K562 (cell line): ENCODE measurements at regions of chr13 and their contacts with region 1.

Region 1: DNA sequence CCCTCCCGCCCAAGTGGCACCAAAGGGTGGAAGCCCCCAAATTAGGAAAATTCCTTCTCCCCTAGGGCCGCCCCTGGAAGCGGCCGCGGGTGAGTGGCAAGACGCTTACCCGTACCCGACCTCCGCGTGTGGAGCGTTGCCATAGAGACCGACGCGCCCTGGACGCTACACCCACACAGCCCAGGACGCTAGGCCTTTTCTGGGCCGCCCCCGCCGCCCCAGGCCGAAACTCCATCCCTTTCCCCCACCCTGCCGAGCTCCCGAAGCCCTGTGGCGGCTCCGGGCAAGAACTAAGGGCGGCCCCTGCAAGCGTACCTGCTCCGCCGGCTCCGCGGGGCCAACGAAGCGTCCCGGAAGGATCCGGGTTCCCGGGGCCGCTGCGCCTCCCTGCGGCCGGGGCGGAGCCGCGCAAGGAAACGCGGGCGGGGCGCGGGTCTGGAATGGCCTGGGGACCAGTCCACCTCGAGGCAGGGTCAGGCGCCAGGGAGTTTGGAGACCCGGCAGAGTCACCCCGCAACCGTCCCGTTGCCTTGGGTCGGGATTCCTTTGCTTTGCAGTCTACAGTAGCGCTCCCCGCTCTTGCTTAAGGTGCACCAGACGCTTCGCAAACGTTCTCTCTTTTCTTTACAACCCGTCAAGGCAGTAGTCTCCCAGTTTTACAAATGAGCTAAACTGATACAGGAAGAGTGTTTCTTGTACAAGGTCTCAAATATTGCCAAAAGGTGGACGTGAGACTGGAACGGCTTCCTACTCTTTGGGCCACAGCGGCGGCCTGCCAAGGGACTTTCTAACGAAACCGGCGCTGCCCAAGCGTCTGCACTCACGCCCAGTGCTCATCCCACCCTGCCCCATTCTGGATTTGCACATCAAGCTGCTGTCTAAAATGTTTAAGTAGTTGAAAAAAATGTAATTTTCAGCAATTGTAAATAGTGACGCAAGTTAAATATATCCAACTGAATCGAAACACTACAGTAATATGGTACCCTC is at the start of gene NEK5:
- DNase-seq: peak; percentile 70 to 78 (median 74)
- ATAC-seq: peak; percentile 94
- H3K4me3 ChIP-seq: peak within 1 kb of the TSS; percentile 64
- H3K27ac ChIP-seq: no peak within 1 kb of the TSS
- H3K4me1 ChIP-seq: peaks cover 22% of the 10 kb centered on the region in 2 experiments; a peak in 4 of 5 replicates
- H3K27me3 ChIP-seq: no peaks in the 10 kb centered on the region
- CTCF ChIP-seq: peak; percentile 73 to 81 (median 74)
- EP300 ChIP-seq: no peak
- POLR2A ChIP-seq: no peak
- RAD21 ChIP-seq: peak; percentile 79 to 84
- polyA plus RNA-seq, gene NEK5: 0.27 to 0.30 TPM

Region 2: GRCh38 chr13:51125498-51126226 is 1003.3 kb before region 1 on chr13:
- CTCF ChIA-PET with region 1: no interaction called
- POLR2A ChIA-PET with region 1: no interaction called
- in situ Hi-C with region 1: loop called (anchors 25 kb)
- intact Hi-C with region 1: no loop called
- DNase-seq: peak; percentile 23 to 55 (median 34)
- ATAC-seq: peak; percentile 91
- H3K4me3 ChIP-seq: no peak overlapping the region
- H3K27ac ChIP-seq: no peak overlapping the region
- H3K4me1 ChIP-seq: no peaks in the 10 kb centered on the region
- H3K27me3 ChIP-seq: no peaks in the 10 kb centered on the region
- CTCF ChIP-seq: peak; percentile 70 to 73 (median 71)
- EP300 ChIP-seq: no peak
- POLR2A ChIP-seq: no peak
- RAD21 ChIP-seq: peak; percentile 67 to 81

Region 3: DNA sequence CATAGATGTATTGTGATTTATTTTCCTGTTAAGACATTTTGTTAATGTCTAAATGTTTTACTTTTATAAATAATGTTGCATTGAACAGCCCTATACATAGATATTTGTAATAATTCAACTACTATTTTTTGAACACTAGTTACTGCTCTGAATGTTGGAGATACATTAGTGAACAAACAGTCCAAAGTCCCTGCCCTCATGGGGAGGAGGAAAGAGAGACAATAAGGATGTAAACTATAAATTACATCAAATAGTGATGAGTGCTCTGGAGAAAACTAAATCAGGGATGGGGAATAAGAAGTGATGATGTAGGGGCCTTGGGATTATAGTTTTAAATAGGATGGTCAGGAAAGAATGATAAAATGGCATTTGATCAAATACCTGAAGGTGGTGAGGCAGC is 663.9 kb before region 1 on chr13:
- CTCF ChIA-PET with region 1: no interaction called
- POLR2A ChIA-PET with region 1: no interaction called
- in situ Hi-C with region 1: no loop called
- intact Hi-C with region 1: no loop called
- DNase-seq: no peak
- ATAC-seq: no peak
- H3K4me3 ChIP-seq: no peak overlapping the region
- H3K27ac ChIP-seq: no peak overlapping the region
- H3K4me1 ChIP-seq: no peaks in the 10 kb centered on the region
- H3K27me3 ChIP-seq: no peaks in the 10 kb centered on the region; a peak in 1 of 5 replicates
- CTCF ChIP-seq: no peak
- EP300 ChIP-seq: no peak
- POLR2A ChIP-seq: no peak
- RAD21 ChIP-seq: no peak

Region 4: DNA sequence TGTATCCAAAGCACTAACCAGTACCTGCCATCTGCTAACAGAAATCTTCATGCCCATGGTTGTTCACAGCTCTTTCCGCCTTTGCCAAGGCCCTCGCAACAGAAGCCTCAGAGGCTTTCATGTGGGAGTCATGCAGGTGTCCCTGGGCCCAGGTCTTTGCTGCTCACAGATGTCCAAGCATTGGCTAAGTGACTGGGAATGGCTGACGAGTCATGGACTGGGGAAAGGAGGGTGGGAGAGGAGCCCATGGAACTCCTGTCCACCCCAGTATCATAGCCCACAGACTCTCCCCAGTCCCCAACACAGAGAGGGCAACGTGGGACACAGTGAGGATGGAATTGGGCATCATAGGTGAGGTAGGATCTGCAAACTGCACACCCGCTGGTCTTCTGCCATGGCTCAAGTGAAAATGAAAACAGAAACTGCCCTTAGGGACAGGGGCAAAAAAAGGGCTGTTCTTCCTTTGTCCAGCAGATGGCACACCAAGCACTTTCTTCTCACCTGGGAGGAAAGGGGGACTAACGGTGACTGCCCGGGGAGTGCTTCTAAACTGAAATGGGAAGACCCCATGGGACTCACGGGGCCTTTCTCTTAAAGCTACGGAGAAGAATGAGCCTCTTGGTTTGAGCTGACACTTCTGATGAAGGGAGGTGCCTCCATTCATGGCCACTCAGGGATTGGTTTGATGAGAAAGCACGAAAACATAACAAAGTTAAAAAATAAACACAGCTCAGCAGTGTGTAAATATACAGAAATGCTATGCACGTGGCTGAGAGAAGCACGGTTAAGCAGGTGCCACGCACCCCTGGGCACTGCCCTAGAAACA is 314.0 kb before region 1 on chr13:
- CTCF ChIA-PET with region 1: interaction called, 4 read pairs
- POLR2A ChIA-PET with region 1: interaction called, 3 read pairs
- in situ Hi-C with region 1: loop called (anchors 10 kb)
- intact Hi-C with region 1: loop called (anchors 2 kb)
- DNase-seq: peak; percentile 48 to 72 (median 57)
- ATAC-seq: peak; percentile 91
- H3K4me3 ChIP-seq: no peak overlapping the region
- H3K27ac ChIP-seq: no peak overlapping the region; the same call in 2 of the 3 replicates
- H3K4me1 ChIP-seq: peaks cover 6 to 16% of the 10 kb centered on the region in 2 experiments; a peak in 4 of 5 replicates
- H3K27me3 ChIP-seq: peaks cover 0 to 26% of the 10 kb centered on the region in 2 experiments; a peak in 3 of 5 replicates
- CTCF ChIP-seq: peak; percentile 67 to 80 (median 77)
- EP300 ChIP-seq: no peak
- POLR2A ChIP-seq: no peak
- RAD21 ChIP-seq: peak; percentile 54 to 75

Region 5: GRCh38 chr13:51844862-51845573 is 284.0 kb before region 1 on chr13 and contains the start of gene TMEM272:
- CTCF ChIA-PET with region 1: no interaction called
- POLR2A ChIA-PET with region 1: no interaction called
- in situ Hi-C with region 1: no loop called
- intact Hi-C with region 1: loop called (anchors 5 kb)
- DNase-seq: peak; percentile 70 to 86 (median 84)
- ATAC-seq: peak; percentile 92
- H3K4me3 ChIP-seq: no peak within 1 kb of the TSS
- H3K27ac ChIP-seq: peak within 1 kb of the TSS; percentile 54; the same call in 1 of the 3 replicates
- H3K4me1 ChIP-seq: peaks cover 6 to 8% of the 10 kb centered on the region in 2 experiments; a peak in 3 of 5 replicates
- H3K27me3 ChIP-seq: no peaks in the 10 kb centered on the region
- CTCF ChIP-seq: peak; percentile 76 to 92 (median 79)
- EP300 ChIP-seq: no peak
- POLR2A ChIP-seq: no peak
- RAD21 ChIP-seq: peak; percentile 33 to 59
- polyA plus RNA-seq, gene TMEM272: 0.07 TPM in 1 of 2 experiments, not detected in the other

Region 6: GRCh38 chr13:51959773-51960172 is 169.2 kb before region 1 on chr13:
- CTCF ChIA-PET with region 1: no interaction called
- POLR2A ChIA-PET with region 1: no interaction called
- in situ Hi-C with region 1: no loop called
- intact Hi-C with region 1: loop called (anchors 5 kb)
- DNase-seq: peak; percentile 21 to 37 (median 32)
- ATAC-seq: peak; percentile 69
- H3K4me3 ChIP-seq: no peak overlapping the region
- H3K27ac ChIP-seq: no peak overlapping the region; the same call in 2 of the 3 replicates
- H3K4me1 ChIP-seq: peaks cover 31 to 50% of the 10 kb centered on the region in 2 experiments
- H3K27me3 ChIP-seq: no peaks in the 10 kb centered on the region
- CTCF ChIP-seq: no peak
- EP300 ChIP-seq: no peak
- POLR2A ChIP-seq: no peak
- RAD21 ChIP-seq: no peak

Region 7: DNA sequence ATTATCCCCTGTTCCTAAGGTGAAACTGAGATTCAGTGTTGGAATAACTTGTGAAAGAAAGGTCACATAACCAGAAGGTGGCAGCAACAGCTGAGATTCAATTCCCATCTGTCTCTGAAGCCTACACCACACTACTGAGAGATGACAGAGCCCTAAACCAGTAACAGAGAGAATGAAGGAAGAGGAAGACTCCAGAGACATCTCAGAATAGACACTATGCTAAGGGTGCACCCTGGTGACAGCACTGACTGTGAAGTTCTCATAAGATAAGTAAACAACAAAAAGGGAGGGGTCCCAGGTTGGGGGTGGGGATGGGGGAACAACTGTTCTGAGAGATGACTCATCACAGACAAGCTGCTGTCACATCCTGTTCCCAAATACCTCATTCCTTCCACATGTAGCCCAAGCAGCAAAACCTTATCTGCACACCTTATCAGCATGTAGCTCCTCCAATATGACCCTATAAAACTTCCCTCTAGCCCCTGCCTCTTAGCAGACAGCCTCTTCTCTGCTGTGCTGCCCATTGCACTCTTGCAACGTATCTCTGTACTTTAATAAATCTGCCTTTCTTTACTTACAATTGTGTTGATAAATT is 58.0 kb before region 1 on chr13:
- CTCF ChIA-PET with region 1: interaction called, 5 read pairs
- POLR2A ChIA-PET with region 1: no interaction called
- in situ Hi-C with region 1: no loop called
- intact Hi-C with region 1: loop called (anchors 1 kb)
- DNase-seq: peak; percentile 54 to 77 (median 68)
- ATAC-seq: peak; percentile 88
- H3K4me3 ChIP-seq: no peak overlapping the region
- H3K27ac ChIP-seq: peak overlapping the region; percentile 74; the same call in 2 of the 3 replicates
- H3K4me1 ChIP-seq: peaks cover 0 to 13% of the 10 kb centered on the region in 2 experiments; a peak in 2 of 5 replicates
- H3K27me3 ChIP-seq: no peaks in the 10 kb centered on the region
- CTCF ChIP-seq: peak in 2 of 3 experiments; percentile 15 to 25; a peak in 1 of 6 replicates
- EP300 ChIP-seq: peak; percentile 37; the same call in 1 of the 2 replicates
- POLR2A ChIP-seq: no peak
- RAD21 ChIP-seq: peak in 1 of 2 experiments; percentile 73; a peak in 3 of 4 replicates